ENCODE measurements at regions of chr3 and their contacts with region 1.

Region 1: DNA sequence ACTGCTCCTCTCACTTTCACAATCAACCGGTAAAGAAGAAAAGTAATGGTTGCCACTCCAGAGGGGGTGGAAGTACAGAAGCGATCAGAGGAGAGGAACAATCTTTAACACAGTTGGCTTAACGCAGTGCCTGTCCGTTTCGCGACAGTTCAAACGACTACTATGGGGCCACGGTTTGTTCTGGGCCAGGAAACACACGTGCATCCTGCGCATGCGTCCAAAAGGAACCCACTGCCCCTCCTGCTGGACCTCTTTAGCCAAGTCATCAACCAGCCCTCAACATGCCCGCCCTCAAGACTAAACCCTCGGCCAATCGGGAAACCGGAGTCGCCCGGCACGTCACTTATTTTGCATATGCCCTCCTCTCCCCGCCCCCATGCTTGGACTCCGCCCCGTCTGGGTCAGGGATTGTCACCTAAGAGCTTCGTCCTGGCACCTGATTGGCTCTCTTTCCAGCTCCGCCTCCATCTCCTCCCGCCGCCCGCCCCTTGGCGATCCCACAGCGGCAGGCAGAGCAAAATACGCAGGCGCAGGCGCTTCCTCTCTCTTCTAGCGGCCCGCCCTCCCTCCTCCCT is 345 bp upstream of the CDV3 start:
- DNase-seq: peak; percentile 100
- H3K4me3 Mint-ChIP-seq: peak overlapping the region; percentile 79
- H3K27ac Mint-ChIP-seq: peak overlapping the region; percentile 98
- H3K4me1 Mint-ChIP-seq: peaks cover 53% of the 10 kb centered on the region
- H3K27me3 Mint-ChIP-seq: no peaks in the 10 kb centered on the region

Region 2: GRCh38 chr3:132416807-132417694 is 1156.1 kb before region 1 on chr3 and contains the start of gene DNAJC13:
- CTCF ChIA-PET with region 1: no interaction called
- POLR2A ChIA-PET with region 1: interaction called, 3 read pairs
- intact Hi-C with region 1: loop called (anchors 2 kb)
- DNase-seq: peak; percentile 94
- H3K4me3 Mint-ChIP-seq: peak within 1 kb of the TSS; percentile 98
- H3K27ac Mint-ChIP-seq: peak within 1 kb of the TSS; percentile 90
- H3K4me1 Mint-ChIP-seq: peaks cover 31% of the 10 kb centered on the region
- H3K27me3 Mint-ChIP-seq: no peaks in the 10 kb centered on the region
- total RNA-seq, gene DNAJC13: 33.5 to 34.5 TPM

Region 3: DNA sequence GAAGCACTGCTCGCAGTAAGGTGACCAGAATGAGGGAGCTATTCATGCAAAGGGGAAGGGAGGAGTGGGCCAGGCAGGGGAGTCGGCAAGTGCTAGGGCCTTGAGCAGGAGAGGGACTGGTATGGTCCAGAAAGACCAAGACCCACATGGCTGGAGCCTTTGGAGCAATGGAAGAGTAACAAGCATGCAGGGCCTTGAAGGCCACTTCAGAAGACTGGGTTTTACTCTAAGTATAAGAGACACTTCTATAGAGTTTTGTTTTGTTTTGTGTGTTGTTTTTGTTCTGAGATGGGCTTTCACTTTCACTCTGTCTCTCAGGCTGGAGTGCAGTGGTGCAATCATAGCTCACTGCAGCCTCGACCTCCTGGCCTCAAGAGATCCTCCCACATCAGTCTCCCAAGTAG is 131.3 kb before region 1 on chr3:
- CTCF ChIA-PET with region 1: interaction called, 14 read pairs
- POLR2A ChIA-PET with region 1: interaction called, 15 read pairs
- intact Hi-C with region 1: loop called (anchors 1 kb)
- DNase-seq: peak; percentile 43
- H3K4me3 Mint-ChIP-seq: peak overlapping the region; percentile 48
- H3K27ac Mint-ChIP-seq: peak overlapping the region; percentile 47
- H3K4me1 Mint-ChIP-seq: peaks cover 35% of the 10 kb centered on the region
- H3K27me3 Mint-ChIP-seq: no peaks in the 10 kb centered on the region

Region 4: GRCh38 chr3:133487920-133488540 is 85.1 kb before region 1 on chr3:
- CTCF ChIA-PET with region 1: interaction called, 30 read pairs
- POLR2A ChIA-PET with region 1: interaction called, 19 read pairs
- intact Hi-C with region 1: loop called (anchors 1 kb)
- DNase-seq: peak; percentile 61
- H3K4me3 Mint-ChIP-seq: no peak overlapping the region
- H3K27ac Mint-ChIP-seq: no peak overlapping the region
- H3K4me1 Mint-ChIP-seq: peaks cover 48% of the 10 kb centered on the region
- H3K27me3 Mint-ChIP-seq: no peaks in the 10 kb centered on the region

Region 5: GRCh38 chr3:133535971-133536634 is 37.0 kb before region 1 on chr3:
- CTCF ChIA-PET with region 1: no interaction called
- POLR2A ChIA-PET with region 1: no interaction called
- intact Hi-C with region 1: no loop called
- DNase-seq: no peak
- H3K4me3 Mint-ChIP-seq: no peak overlapping the region
- H3K27ac Mint-ChIP-seq: no peak overlapping the region
- H3K4me1 Mint-ChIP-seq: no peaks in the 10 kb centered on the region
- H3K27me3 Mint-ChIP-seq: no peaks in the 10 kb centered on the region

Region 6: DNA sequence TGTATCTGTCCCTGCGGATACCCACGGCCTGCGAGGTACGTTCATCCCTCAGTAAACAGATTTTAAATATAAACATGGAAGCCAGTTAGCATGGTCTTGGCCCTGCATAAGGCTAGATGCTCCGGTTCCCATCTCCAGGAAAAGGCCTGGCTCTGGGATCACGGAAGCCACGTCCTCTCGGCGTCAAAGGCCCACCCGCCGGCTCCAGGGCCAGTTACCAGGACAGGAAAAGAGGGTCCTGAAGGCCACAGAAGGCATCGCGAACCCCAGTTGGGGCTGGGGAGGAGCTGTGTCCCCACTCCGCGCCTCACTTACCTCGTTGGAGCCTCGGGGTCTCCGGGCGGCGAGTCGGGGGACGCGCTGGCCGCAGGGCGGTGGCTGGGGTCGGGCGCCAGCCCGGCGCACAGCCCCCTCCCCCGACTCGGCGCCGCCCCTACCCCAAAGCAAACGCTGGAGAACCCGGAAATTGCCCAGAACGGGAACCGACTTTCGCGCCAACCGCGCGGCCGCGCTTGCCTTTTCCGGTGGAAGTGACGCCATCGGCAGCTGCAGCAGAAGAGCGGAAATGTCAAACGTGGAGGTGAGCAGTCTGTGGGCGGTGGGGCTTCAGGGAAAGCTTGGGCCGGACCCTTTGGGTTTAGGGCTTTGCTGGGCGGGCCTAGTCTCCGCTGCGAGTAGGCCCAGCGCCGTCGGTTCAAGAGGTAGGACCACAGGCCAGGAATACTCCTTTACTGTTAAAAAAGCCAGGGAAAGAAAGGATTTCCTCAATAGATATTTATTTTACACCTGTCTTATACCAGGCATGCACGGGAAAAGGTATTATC is 88.5 kb after region 1 on chr3 and contains the start of gene TOPBP1:
- CTCF ChIA-PET with region 1: interaction called, 4 read pairs
- POLR2A ChIA-PET with region 1: interaction called, 11 read pairs
- intact Hi-C with region 1: loop called (anchors 1 kb)
- DNase-seq: peak; percentile 94
- H3K4me3 Mint-ChIP-seq: peak within 1 kb of the TSS; percentile 98
- H3K27ac Mint-ChIP-seq: peak within 1 kb of the TSS; percentile 98
- H3K4me1 Mint-ChIP-seq: peaks cover 32% of the 10 kb centered on the region
- H3K27me3 Mint-ChIP-seq: no peaks in the 10 kb centered on the region
- total RNA-seq, gene TOPBP1: 73.9 to 79.1 TPM

Region 7: DNA sequence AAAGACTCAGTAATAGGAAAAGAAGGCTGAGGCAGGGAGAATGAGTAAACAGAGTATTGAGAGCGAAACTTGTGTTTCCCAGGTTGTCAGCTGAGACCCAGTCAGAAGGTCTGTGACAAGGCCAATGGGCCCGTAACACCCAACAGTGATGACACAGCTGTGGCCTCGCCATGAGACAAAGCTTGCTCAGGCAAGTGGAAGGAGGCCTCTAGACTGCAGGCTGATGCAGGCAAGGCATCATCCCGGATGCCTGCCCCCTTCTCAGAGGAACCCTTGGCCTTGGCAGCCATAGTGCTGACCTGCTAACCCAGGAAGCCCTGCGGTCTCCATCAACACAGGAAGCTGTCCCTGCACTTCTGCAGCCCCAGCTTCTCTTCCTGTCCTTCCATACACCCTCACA is 307.1 kb after region 1 on chr3:
- CTCF ChIA-PET with region 1: no interaction called
- POLR2A ChIA-PET with region 1: no interaction called
- intact Hi-C with region 1: no loop called
- DNase-seq: peak; percentile 67
- H3K4me3 Mint-ChIP-seq: no peak overlapping the region
- H3K27ac Mint-ChIP-seq: no peak overlapping the region
- H3K4me1 Mint-ChIP-seq: peaks cover 26% of the 10 kb centered on the region
- H3K27me3 Mint-ChIP-seq: peaks cover 4% of the 10 kb centered on the region

Region 8: DNA sequence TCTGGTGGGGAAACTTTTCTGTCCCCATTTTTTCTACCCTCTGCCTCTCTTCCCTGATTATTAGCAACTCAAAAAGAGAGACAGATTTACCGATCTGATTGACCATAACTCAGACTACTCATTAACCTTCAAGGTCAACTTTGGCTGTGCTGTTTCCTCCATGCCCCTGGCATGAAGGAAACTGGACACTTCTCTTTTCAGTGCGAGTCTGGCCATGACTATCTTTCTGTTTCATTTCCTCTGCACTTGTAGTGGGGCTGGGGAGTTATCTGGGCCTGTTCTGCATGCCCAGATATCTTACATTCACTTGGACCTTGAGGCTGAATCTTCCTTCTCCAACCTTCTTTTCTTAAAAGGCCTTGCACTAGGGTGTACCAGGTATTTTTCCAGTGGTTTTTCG is 533.4 kb after region 1 on chr3:
- CTCF ChIA-PET with region 1: no interaction called
- POLR2A ChIA-PET with region 1: no interaction called
- intact Hi-C with region 1: no loop called
- DNase-seq: no peak
- H3K4me3 Mint-ChIP-seq: no peak overlapping the region
- H3K27ac Mint-ChIP-seq: no peak overlapping the region
- H3K4me1 Mint-ChIP-seq: peaks cover 4% of the 10 kb centered on the region
- H3K27me3 Mint-ChIP-seq: peaks cover 13% of the 10 kb centered on the region

Region 9: GRCh38 chr3:134239538-134239937 is 666.4 kb after region 1 on chr3:
- CTCF ChIA-PET with region 1: no interaction called
- POLR2A ChIA-PET with region 1: no interaction called
- intact Hi-C with region 1: loop called (anchors 5 kb)
- DNase-seq: no peak
- H3K4me3 Mint-ChIP-seq: peak overlapping the region; percentile 1
- H3K27ac Mint-ChIP-seq: peak overlapping the region; percentile 58
- H3K4me1 Mint-ChIP-seq: peaks cover 79% of the 10 kb centered on the region
- H3K27me3 Mint-ChIP-seq: no peaks in the 10 kb centered on the region